ENCODE measurements at regions of chr14 and their contacts with region 1.

Region 1: DNA sequence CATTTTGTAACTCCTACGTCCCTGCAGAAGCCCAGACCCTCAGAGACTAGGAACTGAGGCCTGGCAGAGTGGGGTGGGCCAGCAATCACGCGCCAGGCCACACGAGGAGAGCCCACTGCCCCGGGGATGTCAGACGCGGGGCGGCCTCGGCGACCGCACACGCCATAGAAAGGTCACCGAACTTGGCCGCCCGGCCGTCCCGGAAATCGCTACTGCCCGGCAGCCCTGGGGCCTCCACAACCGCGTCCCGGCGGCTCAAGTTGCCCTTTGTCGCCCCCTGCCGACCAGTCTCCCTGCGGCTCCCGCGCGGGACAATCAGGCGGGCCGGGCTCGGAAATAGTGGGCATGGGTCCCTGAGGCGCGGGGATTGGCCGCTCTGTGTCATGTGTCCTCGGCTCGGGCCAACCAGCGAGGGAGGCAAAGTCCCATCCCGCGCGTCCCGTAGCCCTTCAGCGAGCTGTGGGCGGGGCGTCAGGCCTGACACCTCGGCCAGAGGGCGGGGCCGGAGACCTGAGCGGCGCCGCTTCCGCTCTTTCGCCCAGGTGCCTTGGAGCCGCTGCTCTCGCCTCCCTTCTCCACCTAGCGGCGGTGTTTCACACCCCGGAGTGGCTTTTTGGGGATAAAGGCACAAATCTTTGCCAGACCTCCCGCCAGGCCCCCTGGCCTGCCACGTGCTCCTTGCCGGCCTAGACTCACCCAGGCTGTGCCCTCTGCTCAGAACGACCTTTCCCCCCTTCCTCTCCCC is 33.4 kb upstream of the DEGS2 start:
- DNase-seq: peak; percentile 100
- CTCF ChIP-seq: peak; percentile 97

Region 2: DNA sequence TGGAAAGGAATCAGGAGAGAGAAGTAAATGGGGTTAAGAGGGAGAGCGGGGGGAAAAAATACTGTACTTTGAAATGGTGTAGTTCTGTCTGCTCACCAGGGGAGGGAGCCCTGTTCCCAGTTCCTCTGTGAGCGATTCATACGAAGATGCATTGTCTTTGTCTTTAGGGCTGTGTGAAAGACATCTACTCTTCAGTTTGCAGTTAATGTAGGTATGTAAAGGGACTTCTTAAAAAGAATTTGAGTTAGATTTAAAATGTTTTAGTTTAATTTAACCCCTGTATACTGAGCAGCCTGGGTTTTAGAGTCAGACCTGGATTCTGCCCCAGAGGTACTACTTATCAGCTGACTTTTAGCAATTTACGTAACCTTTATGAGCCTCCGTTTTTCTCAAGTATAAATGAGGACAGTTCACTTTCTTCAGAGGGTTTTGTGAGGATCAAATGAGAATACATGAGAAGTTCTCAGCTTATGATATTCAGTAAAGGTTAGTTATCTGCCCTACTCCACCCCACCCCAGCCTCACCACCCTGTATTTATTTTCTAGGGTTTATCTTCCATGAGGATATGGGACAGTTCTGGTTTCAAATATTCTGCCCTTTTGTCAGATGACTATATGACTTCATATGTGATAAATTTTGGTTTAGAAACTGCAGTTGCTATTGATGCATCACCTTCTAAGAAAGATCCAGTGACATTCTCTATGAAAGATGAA is 210.2 kb before region 1 on chr14:
- CTCF ChIA-PET with region 1: interaction called, 32 read pairs
- POLR2A ChIA-PET with region 1: no interaction called
- DNase-seq: peak; percentile 75
- CTCF ChIP-seq: peak; percentile 83

Region 3: DNA sequence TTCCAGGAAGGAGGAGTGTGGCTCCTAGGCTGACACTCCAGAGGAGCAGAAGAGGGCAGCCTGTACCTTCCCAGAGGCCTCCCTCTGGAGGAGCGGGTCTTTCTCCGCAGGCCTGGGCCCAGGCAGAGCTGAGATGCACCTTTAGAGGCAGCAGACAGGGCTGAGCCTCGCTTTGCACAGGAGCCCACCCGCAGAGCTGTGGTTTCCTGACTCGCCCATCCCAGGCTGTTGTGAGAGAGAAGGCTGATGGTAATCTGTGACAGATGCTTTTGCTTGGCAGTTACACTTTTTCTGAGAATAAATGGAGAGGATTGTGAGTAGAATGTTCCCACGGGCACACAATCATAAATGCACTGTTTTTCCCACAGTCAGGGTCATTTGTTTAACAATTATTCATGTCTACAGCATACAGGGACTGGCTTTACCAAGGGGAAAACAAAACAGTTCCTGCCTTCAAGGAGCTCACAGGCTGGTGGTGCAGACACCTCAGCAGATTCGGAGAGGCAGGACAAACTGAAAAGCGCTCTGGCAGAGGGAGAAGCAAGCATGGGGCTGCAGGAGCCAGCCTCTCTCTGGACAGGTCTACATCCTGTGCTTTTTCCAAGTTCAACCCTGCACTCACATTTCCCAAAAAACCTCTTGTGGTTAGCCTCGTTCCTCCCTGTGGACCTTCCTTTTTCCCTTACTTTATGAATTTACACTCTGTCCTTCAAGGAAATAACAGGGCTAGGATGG is 113.7 kb before region 1 on chr14:
- CTCF ChIA-PET with region 1: interaction called, 23 read pairs
- POLR2A ChIA-PET with region 1: no interaction called
- DNase-seq: peak; percentile 39
- CTCF ChIP-seq: peak; percentile 2

Region 4: GRCh38 chr14:100138082-100138787 is 54.6 kb before region 1 on chr14:
- CTCF ChIA-PET with region 1: interaction called, 10 read pairs
- POLR2A ChIA-PET with region 1: no interaction called
- DNase-seq: peak; percentile 56
- CTCF ChIP-seq: no peak

Region 5: DNA sequence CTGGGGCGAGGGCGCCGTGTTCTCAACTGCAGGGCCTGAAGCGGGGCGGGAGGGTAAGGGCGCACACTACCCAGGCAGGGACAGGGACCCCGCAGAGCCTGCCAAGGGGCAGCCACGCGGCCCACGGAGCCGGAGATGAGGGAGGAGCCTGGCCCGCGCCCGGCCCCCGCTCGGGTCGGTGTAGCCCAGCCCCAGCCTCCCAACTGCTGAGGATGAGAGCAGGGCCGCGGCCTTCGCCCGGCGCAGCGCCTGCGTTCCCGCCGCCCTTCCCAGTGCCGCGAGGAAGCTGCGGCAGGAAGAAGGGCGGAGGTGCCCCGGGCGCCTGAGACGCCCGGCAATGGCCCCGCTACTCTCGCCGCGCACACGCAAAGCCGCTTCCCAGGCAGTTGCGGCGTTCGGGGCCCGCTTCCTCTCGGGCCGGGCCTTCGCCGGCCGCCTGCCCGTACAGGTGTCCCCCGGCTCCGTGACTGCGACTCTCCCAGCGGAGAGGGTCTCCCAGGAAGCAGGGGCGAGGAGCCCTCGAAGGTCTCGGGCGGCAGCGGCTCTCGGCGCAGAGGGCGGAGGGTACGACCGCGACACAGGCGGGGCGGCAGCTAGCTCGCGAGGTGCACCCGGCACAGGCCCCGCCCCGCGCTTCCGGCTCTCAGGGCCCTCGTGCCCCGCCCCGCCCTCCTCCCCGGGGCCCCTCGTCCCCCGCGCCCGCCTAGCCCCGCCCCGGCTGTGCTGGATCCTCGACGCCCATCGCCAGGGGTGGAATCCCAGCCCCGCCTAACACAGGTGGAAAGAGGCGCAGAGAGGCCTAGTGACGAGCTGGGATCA is 21.3 kb after region 1 on chr14:
- CTCF ChIA-PET with region 1: interaction called, 27 read pairs
- POLR2A ChIA-PET with region 1: interaction called, 3 read pairs
- DNase-seq: peak; percentile 97
- CTCF ChIP-seq: no peak

Region 6: GRCh38 chr14:100239840-100240724 is 47.2 kb after region 1 on chr14:
- CTCF ChIA-PET with region 1: interaction called, 15 read pairs
- POLR2A ChIA-PET with region 1: interaction called, 3 read pairs
- DNase-seq: peak; percentile 88
- CTCF ChIP-seq: peak; percentile 60

Region 7: DNA sequence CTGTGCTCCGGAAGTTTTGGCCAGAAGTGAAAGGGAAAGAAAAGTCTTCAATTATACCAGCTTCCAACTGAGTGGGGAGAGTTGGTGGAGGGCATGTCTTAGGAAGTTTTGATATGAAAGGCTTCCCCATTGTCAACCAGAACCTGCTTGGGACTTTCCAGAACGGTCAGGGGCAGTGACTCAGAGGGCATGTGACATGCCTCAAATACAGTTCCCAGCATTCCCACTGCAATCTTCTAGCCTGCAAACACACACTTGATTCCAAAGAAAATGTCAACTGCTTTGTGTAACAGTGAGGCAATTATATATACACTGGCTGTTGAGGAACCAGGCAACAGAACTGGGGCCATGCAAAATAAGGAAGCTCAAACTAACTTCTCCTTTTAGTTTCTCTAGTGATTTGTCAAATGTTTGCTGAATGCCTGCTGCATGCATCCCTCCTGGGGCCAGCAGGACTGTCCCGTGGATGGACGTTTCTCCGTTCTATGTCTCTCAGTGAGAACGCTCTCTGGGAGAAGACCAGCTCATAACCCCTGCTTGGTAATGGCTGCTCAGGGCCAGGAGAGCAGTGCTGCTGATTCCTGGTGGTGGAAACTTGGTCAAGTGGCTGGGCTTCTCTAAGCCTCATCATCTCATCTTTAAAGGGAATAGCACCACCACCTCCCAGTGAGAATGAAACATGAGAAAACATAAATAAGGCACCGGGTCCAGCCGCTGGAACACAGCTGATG is 148.6 kb after region 1 on chr14:
- CTCF ChIA-PET with region 1: no interaction called
- POLR2A ChIA-PET with region 1: no interaction called
- DNase-seq: peak; percentile 75
- CTCF ChIP-seq: no peak

Measured in GM10248 (cell line).